ENCODE measurements at regions of chr17 and their contacts with region 1.

Region 1: DNA sequence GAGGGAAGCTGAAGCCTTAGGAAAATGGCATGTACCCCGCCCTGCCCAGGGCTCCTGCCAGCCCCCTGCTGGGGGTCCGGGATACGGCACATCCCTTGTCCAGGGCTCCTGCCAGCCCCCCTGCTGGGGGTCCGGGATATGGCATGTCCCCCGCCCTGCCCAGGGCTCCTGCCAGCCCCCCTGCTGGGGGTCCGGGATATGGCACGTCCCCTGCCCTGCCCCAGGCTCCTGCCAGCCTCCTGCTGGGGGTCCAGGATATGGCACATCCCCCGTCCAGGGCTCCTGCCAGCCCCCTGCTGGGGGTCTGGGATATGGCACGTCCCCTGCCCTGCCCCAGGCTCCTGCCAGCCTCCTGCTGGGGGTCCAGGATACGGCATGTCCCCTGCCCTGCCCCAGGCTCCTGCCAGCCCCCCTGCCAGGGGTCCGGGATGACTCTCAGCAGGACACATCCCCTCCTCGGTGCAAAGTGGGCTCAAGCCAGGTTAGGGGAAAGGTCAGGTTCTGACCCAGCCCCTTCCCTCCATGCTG is 43.2 kb downstream of the RPH3AL start:
- DNase-seq: peak; percentile 53
- ATAC-seq: peak; percentile 78
- H3K4me3 ChIP-seq: no peak overlapping the region
- H3K27ac ChIP-seq: no peak overlapping the region
- H3K4me1 ChIP-seq: no peaks in the 10 kb centered on the region
- H3K27me3 ChIP-seq: no peaks in the 10 kb centered on the region
- CTCF ChIP-seq: peak; percentile 42; the same call in 1 of the 2 replicates
- EP300 ChIP-seq: no peak
- POLR2A ChIP-seq: no peak
- RAD21 ChIP-seq: 0 out of 2 replicates have a peak, but pooled peaks have one; percentile 20

Region 2: DNA sequence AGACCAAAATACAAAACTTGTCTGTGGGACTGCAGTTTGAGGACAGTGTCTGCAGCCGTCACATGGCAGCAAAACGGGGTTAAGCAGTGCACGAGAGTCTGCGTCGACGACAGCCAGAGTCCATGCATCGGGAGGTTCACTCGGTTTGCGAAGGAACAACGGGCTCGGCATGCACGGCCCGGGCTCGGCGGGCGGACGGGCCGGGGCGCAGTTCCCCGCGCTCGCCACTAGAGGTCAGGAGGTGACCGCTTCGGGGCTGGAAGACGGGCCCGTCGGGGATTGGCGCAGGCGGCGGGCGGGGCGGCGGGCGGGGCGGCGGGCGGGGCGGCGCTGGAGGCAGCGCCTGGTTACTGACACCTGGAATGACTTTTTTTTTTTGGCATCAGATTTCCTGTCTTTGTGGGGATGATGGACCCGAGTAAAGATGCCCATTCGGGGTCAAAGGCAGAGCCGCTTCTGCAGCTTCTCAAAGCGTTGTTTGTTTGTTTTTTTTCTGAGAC is 165.6 kb before region 1 on chr17:
- CTCF ChIA-PET with region 1: interaction called, 40 read pairs
- POLR2A ChIA-PET with region 1: no interaction called
- in situ Hi-C with region 1: no loop called
- intact Hi-C with region 1: no loop called
- DNase-seq: peak; percentile 48
- ATAC-seq: peak; percentile 72
- H3K4me3 ChIP-seq: no peak overlapping the region; a peak in 1 of 6 replicates
- H3K27ac ChIP-seq: no peak overlapping the region
- H3K4me1 ChIP-seq: peaks cover 23% of the 10 kb centered on the region
- H3K27me3 ChIP-seq: peaks cover 2 to 30% of the 10 kb centered on the region in 2 experiments; a peak in 3 of 5 replicates
- CTCF ChIP-seq: peak; percentile 91
- EP300 ChIP-seq: no peak
- POLR2A ChIP-seq: no peak
- RAD21 ChIP-seq: peak; percentile 89

Region 3: GRCh38 chr17:164303-165235 is 144.9 kb before region 1 on chr17:
- CTCF ChIA-PET with region 1: interaction called, 69 read pairs
- POLR2A ChIA-PET with region 1: no interaction called
- in situ Hi-C with region 1: no loop called
- intact Hi-C with region 1: no loop called
- DNase-seq: peak; percentile 40
- ATAC-seq: peak; percentile 79
- H3K4me3 ChIP-seq: no peak overlapping the region; a peak in 1 of 6 replicates
- H3K27ac ChIP-seq: no peak overlapping the region
- H3K4me1 ChIP-seq: no peaks in the 10 kb centered on the region
- H3K27me3 ChIP-seq: peaks cover 8 to 44% of the 10 kb centered on the region in 2 experiments; a peak in 4 of 5 replicates
- CTCF ChIP-seq: peak; percentile 89
- EP300 ChIP-seq: no peak
- POLR2A ChIP-seq: no peak
- RAD21 ChIP-seq: peak; percentile 65; the same call in 1 of the 2 replicates

Region 4: GRCh38 chr17:199191-199604 is 110.2 kb before region 1 on chr17:
- CTCF ChIA-PET with region 1: no interaction called
- POLR2A ChIA-PET with region 1: no interaction called
- in situ Hi-C with region 1: no loop called
- intact Hi-C with region 1: no loop called
- DNase-seq: no peak
- ATAC-seq: no peak
- H3K4me3 ChIP-seq: no peak overlapping the region
- H3K27ac ChIP-seq: no peak overlapping the region
- H3K4me1 ChIP-seq: peaks cover 19% of the 10 kb centered on the region
- H3K27me3 ChIP-seq: peaks cover 2 to 27% of the 10 kb centered on the region in 2 experiments; a peak in 3 of 5 replicates
- CTCF ChIP-seq: no peak
- EP300 ChIP-seq: no peak
- POLR2A ChIP-seq: no peak
- RAD21 ChIP-seq: no peak

Region 5: DNA sequence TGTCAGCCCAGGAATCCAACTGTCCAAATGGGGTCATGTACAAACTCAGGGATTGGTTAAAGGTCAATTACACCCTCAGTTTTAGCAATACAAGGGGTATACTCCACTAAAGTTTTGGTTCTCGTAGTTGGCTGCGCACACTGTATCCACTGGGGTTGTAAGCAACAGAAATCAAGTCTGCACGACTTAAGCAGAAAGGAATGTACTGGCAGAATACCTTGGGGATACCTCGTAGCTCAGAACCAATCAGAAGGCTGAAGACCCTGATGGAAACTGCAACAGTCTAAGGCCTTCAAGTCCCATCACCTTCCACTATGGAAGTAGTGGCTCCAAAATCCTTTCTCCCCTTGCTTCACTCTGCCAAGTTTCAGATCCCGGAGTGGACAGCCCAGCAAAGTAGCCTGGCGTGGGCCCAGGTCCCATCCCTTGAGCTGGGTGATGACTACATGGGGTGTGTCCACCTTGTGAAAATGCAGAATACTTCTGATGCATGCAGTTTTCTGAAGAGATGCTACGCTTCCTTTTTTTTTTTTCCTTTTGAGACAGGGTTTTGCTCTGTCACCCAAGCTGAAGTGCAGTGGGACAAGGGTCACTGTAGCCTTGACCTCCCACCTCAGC is 64.3 kb after region 1 on chr17:
- CTCF ChIA-PET with region 1: no interaction called
- POLR2A ChIA-PET with region 1: no interaction called
- in situ Hi-C with region 1: no loop called
- intact Hi-C with region 1: no loop called
- DNase-seq: no peak
- ATAC-seq: no peak
- H3K4me3 ChIP-seq: no peak overlapping the region
- H3K27ac ChIP-seq: no peak overlapping the region
- H3K4me1 ChIP-seq: peaks cover 22% of the 10 kb centered on the region
- H3K27me3 ChIP-seq: no peaks in the 10 kb centered on the region
- CTCF ChIP-seq: no peak
- EP300 ChIP-seq: no peak
- POLR2A ChIP-seq: no peak
- RAD21 ChIP-seq: no peak

Region 6: DNA sequence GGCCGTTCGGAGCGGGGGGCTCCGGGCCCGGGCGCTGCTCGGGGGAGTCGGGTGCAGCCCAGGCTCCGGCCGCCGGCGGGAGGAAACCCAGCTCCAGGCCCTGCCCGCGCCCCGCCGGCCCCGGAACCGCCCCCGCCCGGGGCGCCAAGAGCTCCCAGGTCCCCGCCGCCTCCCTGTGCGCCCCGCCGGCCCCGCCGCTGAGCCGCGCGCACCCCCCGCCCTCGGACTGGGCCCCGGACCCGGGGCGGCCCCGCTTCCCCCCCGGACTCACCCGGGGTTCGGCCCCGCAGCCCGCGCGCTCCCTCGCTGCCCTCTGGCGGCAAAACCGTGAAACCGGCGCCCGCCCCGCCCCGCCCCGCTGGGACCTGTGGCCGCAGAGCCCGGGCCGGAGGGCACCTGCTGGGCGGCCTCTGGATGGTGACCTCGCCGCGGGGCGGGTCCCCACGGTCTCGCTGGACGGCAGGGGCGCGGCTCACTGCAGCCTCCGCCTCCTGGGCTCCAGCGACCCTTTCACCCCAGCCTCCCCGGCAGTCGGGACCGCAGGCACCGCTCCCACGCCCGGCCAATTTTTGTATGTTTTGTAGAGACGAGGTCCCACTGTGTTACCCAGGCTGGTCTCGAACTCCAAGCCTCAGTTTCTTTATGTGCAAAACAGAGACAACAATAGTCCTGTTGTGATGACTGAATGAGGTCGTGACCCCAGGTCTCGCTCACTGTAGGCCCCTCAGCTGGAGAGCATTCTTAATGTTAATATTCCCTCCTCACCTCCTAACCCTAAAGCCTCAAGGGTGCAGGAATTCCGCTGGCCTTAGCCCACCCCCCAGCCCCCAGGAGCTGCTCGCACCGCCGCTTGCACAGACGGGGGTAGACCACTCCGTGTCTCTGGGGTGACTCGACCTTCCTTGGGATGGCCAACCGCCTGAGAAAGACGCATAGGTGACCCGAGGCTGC is 76.8 kb after region 1 on chr17:
- CTCF ChIA-PET with region 1: interaction called, 15 read pairs
- POLR2A ChIA-PET with region 1: no interaction called
- in situ Hi-C with region 1: no loop called
- intact Hi-C with region 1: no loop called
- DNase-seq: peak; percentile 47
- ATAC-seq: peak; percentile 86
- H3K4me3 ChIP-seq: peak overlapping the region; percentile 55 to 70 (median 57)
- H3K27ac ChIP-seq: no peak overlapping the region
- H3K4me1 ChIP-seq: peaks cover 62% of the 10 kb centered on the region
- H3K27me3 ChIP-seq: 0 out of 5 replicates have a peak, but pooled peaks cover 0 to 1% of the 10 kb centered on the region in 2 experiments
- CTCF ChIP-seq: peak; percentile 79
- EP300 ChIP-seq: no peak
- POLR2A ChIP-seq: peak in 1 of 2 experiments; percentile 55; a peak in 2 of 4 replicates
- RAD21 ChIP-seq: peak; percentile 90

Measured in HepG2 (cell line).